ENCODE measurements at regions of chr16 and their contacts with region 1.

Region 1: GRCh38 chr16:15643048-15643945 is at the start of gene MARF1:
- DNase-seq: peak; percentile 99
- H3K4me3 Mint-ChIP-seq: peak within 1 kb of the TSS; percentile 86
- H3K27ac Mint-ChIP-seq: peak within 1 kb of the TSS; percentile 93
- H3K4me1 Mint-ChIP-seq: peaks cover 50% of the 10 kb centered on the region
- H3K27me3 Mint-ChIP-seq: no peaks in the 10 kb centered on the region
- total RNA-seq, gene MARF1: 85.4 to 85.5 TPM

Region 2: GRCh38 chr16:15592324-15592723 is 51.0 kb before region 1 on chr16:
- CTCF ChIA-PET with region 1: interaction called, 7 read pairs
- POLR2A ChIA-PET with region 1: interaction called, 24 read pairs
- DNase-seq: peak; percentile 28
- H3K4me3 Mint-ChIP-seq: no peak overlapping the region
- H3K27ac Mint-ChIP-seq: peak overlapping the region; percentile 65
- H3K4me1 Mint-ChIP-seq: peaks cover 52% of the 10 kb centered on the region
- H3K27me3 Mint-ChIP-seq: no peaks in the 10 kb centered on the region

Region 3: GRCh38 chr16:15631730-15632409 is 11.4 kb before region 1 on chr16:
- CTCF ChIA-PET with region 1: interaction called, 8 read pairs
- POLR2A ChIA-PET with region 1: interaction called, 17 read pairs
- DNase-seq: no peak
- H3K4me3 Mint-ChIP-seq: no peak overlapping the region
- H3K27ac Mint-ChIP-seq: no peak overlapping the region
- H3K4me1 Mint-ChIP-seq: peaks cover 23% of the 10 kb centered on the region
- H3K27me3 Mint-ChIP-seq: no peaks in the 10 kb centered on the region

Region 4: GRCh38 chr16:15665107-15665506 is 21.8 kb after region 1 on chr16:
- CTCF ChIA-PET with region 1: no interaction called
- POLR2A ChIA-PET with region 1: interaction called, 21 read pairs
- DNase-seq: no peak
- H3K4me3 Mint-ChIP-seq: no peak overlapping the region
- H3K27ac Mint-ChIP-seq: no peak overlapping the region
- H3K4me1 Mint-ChIP-seq: peaks cover 20% of the 10 kb centered on the region
- H3K27me3 Mint-ChIP-seq: no peaks in the 10 kb centered on the region

Region 5: DNA sequence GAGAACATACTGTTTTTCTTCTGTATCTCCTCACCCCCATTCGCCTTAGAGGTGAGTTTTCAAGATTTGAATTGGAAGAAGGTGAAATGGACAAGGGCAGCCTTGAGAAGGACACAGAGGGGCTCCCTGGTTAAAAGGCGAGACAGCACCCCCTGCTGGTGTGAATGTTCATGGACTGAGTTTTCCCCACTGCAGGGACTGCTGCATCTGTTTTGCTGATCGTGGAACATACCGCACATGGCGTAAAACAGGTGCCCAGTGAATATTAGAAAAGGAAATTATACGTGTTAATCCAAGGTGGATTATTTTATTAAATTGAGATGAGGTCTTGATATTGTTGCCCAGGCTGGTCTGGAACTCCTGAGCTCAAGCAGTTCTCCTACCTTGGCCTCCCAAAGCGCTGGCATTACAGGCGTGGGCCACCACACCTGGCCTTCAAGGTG is 61.3 kb after region 1 on chr16:
- CTCF ChIA-PET with region 1: interaction called, 12 read pairs
- POLR2A ChIA-PET with region 1: interaction called, 8 read pairs
- DNase-seq: peak; percentile 75
- H3K4me3 Mint-ChIP-seq: no peak overlapping the region
- H3K27ac Mint-ChIP-seq: no peak overlapping the region
- H3K4me1 Mint-ChIP-seq: peaks cover 20% of the 10 kb centered on the region
- H3K27me3 Mint-ChIP-seq: no peaks in the 10 kb centered on the region